ENCODE measurements at regions of chr1 and their contacts with region 1.

Region 1: GRCh38 chr1:20633190-20634064 is at the start of gene PINK1:
- DNase-seq: peak; percentile 74 to 94 (median 87)
- ATAC-seq: peak; percentile 90
- H3K4me3 ChIP-seq: peak within 1 kb of the TSS; percentile 59 to 62
- H3K4me3 Mint-ChIP-seq: peak within 1 kb of the TSS; percentile 87
- H3K27ac ChIP-seq: peak within 1 kb of the TSS; percentile 46 to 55
- H3K27ac Mint-ChIP-seq: peak within 1 kb of the TSS; percentile 85
- H3K4me1 ChIP-seq: peaks cover 8% of the 10 kb centered on the region
- H3K4me1 Mint-ChIP-seq: peaks cover 9% of the 10 kb centered on the region
- H3K27me3 ChIP-seq: no peaks in the 10 kb centered on the region
- H3K27me3 Mint-ChIP-seq: no peaks in the 10 kb centered on the region
- CTCF ChIP-seq: peak; percentile 98
- total RNA-seq, gene PINK1: 8.0 to 8.3 TPM

Region 2: GRCh38 chr1:19882111-19883071 is 751.0 kb before region 1 on chr1 and contains the start of gene OTUD3:
- CTCF ChIA-PET with region 1: no interaction called
- POLR2A ChIA-PET with region 1: no interaction called
- intact Hi-C with region 1: loop called in 1 of 2 experiments (anchors 2 kb)
- DNase-seq: peak; percentile 89 to 99 (median 95)
- ATAC-seq: peak; percentile 97
- H3K4me3 ChIP-seq: peak within 1 kb of the TSS; percentile 71 to 88
- H3K4me3 Mint-ChIP-seq: peak within 1 kb of the TSS; percentile 90
- H3K27ac ChIP-seq: peak within 1 kb of the TSS; percentile 67 to 77
- H3K27ac Mint-ChIP-seq: peak within 1 kb of the TSS; percentile 61
- H3K4me1 ChIP-seq: peaks cover 18% of the 10 kb centered on the region
- H3K4me1 Mint-ChIP-seq: peaks cover 43% of the 10 kb centered on the region
- H3K27me3 ChIP-seq: no peaks in the 10 kb centered on the region
- H3K27me3 Mint-ChIP-seq: no peaks in the 10 kb centered on the region
- CTCF ChIP-seq: peak; percentile 90
- total RNA-seq, gene OTUD3: 16.5 to 17.3 TPM

Region 3: DNA sequence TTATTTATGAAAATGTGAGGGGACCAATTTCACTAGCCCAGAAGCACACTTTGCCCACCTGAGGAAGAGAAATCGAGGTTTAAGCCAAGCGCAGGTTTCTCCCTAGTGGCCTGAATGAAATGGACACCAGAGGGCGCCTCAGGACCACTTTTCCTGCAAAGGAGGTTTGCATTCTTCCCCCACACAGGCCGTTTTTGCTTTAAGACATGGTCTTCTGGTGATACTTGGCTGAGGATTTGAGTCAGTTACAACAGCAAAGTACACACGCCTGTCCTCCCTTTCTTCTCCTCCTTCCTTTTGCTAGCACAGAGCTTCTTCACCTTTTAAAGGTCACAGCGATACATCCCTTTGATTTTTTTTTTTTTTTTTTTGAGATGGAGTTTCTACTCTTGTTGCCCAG is 715.4 kb before region 1 on chr1:
- CTCF ChIA-PET with region 1: no interaction called
- POLR2A ChIA-PET with region 1: no interaction called
- intact Hi-C with region 1: loop called in 1 of 2 experiments (anchors 5 kb)
- DNase-seq: peak; percentile 67 to 88 (median 81)
- ATAC-seq: peak; percentile 57
- H3K4me3 ChIP-seq: no peak overlapping the region
- H3K4me3 Mint-ChIP-seq: no peak overlapping the region
- H3K27ac ChIP-seq: no peak overlapping the region
- H3K27ac Mint-ChIP-seq: no peak overlapping the region
- H3K4me1 ChIP-seq: no peaks in the 10 kb centered on the region
- H3K4me1 Mint-ChIP-seq: peaks cover 2% of the 10 kb centered on the region
- H3K27me3 ChIP-seq: no peaks in the 10 kb centered on the region
- H3K27me3 Mint-ChIP-seq: peaks cover 5% of the 10 kb centered on the region
- CTCF ChIP-seq: peak; percentile 88

Region 4: DNA sequence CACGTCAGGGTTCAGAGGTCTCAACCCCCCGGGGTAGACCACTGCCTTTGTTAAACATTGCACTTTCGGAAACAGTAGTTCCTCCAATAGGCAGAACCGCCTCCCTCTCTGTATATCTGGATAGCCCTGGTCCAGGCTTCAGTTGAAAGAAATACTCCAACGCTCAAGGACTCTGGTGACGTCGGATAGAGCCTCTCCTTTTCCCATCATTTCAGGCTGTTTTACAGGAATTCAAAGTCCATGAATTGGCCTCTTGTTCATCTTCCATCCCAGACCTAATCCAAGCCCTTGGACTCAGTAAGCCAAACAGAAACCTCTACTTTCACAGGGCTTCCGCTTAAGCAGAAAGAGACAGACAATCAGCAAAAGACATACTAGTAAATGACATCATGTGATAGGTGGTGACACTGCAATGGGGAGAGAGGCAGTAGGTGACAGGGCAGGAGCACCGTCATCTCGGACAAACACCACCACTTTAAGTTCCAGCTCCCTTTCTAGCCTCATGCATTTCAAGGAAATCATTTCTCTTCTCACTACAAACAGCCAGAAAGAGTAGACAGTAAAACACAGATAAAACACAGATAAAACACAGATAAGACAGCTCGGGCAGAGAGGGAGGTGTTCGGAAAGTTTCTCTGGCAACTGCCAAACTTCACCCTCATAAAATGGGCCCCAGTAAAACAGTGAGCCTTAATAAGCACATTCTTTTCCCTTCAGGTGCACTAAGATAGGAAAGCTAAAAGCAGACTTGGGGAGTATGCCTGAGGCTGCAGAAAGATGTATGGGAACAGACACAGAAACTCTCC is 651.7 kb before region 1 on chr1:
- CTCF ChIA-PET with region 1: no interaction called
- POLR2A ChIA-PET with region 1: no interaction called
- intact Hi-C with region 1: no loop called
- DNase-seq: no peak
- ATAC-seq: no peak
- H3K4me3 ChIP-seq: no peak overlapping the region
- H3K4me3 Mint-ChIP-seq: no peak overlapping the region
- H3K27ac ChIP-seq: no peak overlapping the region
- H3K27ac Mint-ChIP-seq: no peak overlapping the region
- H3K4me1 ChIP-seq: no peaks in the 10 kb centered on the region
- H3K4me1 Mint-ChIP-seq: no peaks in the 10 kb centered on the region
- H3K27me3 ChIP-seq: no peaks in the 10 kb centered on the region
- H3K27me3 Mint-ChIP-seq: peaks cover 26% of the 10 kb centered on the region
- CTCF ChIP-seq: no peak

Region 5: DNA sequence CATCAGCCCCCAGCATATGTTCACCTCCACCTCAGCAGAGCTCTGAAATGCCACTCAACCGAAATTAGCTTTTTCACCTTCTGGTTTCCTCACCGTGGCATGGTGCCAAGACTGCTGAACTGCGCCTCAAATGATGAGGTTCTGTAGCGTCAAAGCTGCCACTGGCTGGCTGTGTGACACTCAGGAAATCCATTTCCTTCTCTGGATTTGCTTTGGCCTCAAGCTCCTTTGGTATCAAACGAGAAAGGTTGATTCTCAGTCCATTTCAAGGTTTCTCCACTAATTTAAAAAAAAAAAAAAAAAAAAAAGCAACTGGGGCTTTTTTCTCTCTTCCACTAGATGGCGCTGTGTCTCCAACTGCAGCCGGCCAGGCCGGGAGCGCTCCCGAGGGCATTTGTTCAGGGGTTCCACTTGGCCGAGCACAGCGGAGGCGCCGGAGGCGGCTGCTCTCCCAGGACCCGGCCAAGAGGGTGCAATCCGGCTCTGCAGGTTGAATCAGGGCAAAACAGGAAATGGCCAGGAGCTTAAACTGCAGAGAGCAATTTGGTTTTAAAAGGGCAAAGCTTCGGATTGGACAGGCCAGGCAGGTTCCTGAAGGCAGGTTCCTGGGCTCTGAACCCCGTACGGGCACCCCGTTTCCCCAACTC is 420.6 kb before region 1 on chr1:
- CTCF ChIA-PET with region 1: no interaction called
- POLR2A ChIA-PET with region 1: no interaction called
- intact Hi-C with region 1: loop called (anchors 10 kb)
- DNase-seq: peak; percentile 14 to 70 (median 46)
- ATAC-seq: peak; percentile 55
- H3K4me3 ChIP-seq: no peak overlapping the region
- H3K4me3 Mint-ChIP-seq: peak overlapping the region; percentile 59
- H3K27ac ChIP-seq: no peak overlapping the region
- H3K27ac Mint-ChIP-seq: no peak overlapping the region
- H3K4me1 ChIP-seq: peaks cover 6% of the 10 kb centered on the region
- H3K4me1 Mint-ChIP-seq: peaks cover 5% of the 10 kb centered on the region
- H3K27me3 ChIP-seq: peaks cover 0 to 4% of the 10 kb centered on the region in 2 experiments
- H3K27me3 Mint-ChIP-seq: peaks cover 44% of the 10 kb centered on the region
- CTCF ChIP-seq: peak; percentile 83

Region 6: DNA sequence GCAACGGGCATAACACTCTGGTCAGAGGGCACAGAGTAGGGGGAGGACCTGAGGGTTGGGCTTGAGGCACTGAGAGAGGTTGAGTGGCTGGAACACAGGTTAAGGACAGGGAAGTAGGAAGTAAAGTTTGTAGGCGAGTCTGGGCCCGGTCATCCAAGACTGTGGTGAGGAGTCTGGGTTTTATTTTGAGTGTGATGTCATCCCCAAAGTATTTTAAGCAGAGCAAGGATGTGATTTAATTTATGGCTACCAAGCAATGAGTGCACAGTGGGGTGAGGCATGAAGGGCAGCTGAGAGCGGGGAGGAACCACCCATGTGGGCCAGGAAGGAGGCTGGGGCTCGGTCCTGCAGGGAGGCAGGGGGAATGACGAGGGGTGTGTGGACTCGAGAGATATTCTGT is 353.9 kb before region 1 on chr1:
- CTCF ChIA-PET with region 1: no interaction called
- POLR2A ChIA-PET with region 1: no interaction called
- intact Hi-C with region 1: no loop called
- DNase-seq: no peak
- ATAC-seq: no peak
- H3K4me3 ChIP-seq: no peak overlapping the region
- H3K4me3 Mint-ChIP-seq: no peak overlapping the region
- H3K27ac ChIP-seq: no peak overlapping the region
- H3K27ac Mint-ChIP-seq: no peak overlapping the region
- H3K4me1 ChIP-seq: no peaks in the 10 kb centered on the region
- H3K4me1 Mint-ChIP-seq: no peaks in the 10 kb centered on the region
- H3K27me3 ChIP-seq: peaks cover 0 to 3% of the 10 kb centered on the region in 2 experiments
- H3K27me3 Mint-ChIP-seq: peaks cover 26% of the 10 kb centered on the region
- CTCF ChIP-seq: no peak

Region 7: GRCh38 chr1:20521960-20522861 is 111.2 kb before region 1 on chr1:
- CTCF ChIA-PET with region 1: interaction called, 67 read pairs
- POLR2A ChIA-PET with region 1: no interaction called
- intact Hi-C with region 1: loop called in 1 of 2 experiments (anchors 1 kb)
- DNase-seq: peak; percentile 38 to 74 (median 68)
- ATAC-seq: peak; percentile 65
- H3K4me3 ChIP-seq: no peak overlapping the region
- H3K4me3 Mint-ChIP-seq: no peak overlapping the region
- H3K27ac ChIP-seq: no peak overlapping the region
- H3K27ac Mint-ChIP-seq: no peak overlapping the region
- H3K4me1 ChIP-seq: no peaks in the 10 kb centered on the region
- H3K4me1 Mint-ChIP-seq: no peaks in the 10 kb centered on the region
- H3K27me3 ChIP-seq: no peaks in the 10 kb centered on the region
- H3K27me3 Mint-ChIP-seq: peaks cover 22% of the 10 kb centered on the region
- CTCF ChIP-seq: peak; percentile 82

Region 8: DNA sequence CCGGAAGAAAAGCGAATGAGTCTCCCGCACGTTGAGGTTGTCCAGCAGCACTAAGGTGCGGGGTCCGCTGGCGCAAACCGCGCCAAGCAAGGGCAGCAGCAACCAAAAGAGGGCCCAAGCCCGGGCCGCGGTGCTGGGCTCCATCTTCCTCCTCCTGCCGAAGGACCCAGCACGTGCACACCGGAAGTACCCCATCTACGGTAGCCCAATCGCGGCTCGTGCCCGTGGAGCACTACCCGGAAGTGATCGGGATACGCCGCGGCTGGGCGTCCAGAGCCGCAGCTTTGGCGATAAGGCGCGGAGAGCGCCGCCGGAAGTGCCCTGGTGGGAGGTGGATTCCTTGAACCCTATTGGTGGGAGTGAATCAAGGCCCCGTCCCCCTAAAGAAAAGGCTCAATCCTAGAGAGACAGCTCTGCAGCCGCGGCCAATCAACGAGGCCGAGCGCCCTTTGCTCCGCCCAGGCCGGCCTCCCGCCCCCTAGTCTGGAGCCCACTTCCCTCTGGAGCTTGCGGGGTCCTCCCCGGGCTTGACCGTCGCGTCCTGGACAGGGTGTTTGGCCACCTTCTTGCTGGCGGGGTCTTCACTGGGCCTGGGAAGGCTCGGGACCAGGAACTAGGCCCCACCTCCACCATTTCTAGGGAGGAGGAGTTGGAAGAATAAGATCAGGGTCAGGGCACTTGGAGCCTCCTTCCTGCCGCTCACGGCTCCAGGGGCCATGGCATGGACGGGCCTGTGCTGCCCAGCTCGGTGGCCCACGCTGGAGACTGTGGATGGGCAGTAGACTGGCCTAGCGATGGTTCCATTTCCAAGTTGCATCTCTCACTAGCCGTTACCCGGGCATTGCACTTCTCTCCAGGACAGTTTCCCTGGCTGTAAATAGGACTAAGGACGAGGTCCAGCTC is 28.0 kb after region 1 on chr1 and contains the start of gene DDOST:
- CTCF ChIA-PET with region 1: interaction called, 20 read pairs
- POLR2A ChIA-PET with region 1: interaction called, 8 read pairs
- intact Hi-C with region 1: loop called (anchors 1 kb)
- DNase-seq: peak; percentile 86 to 98 (median 94)
- ATAC-seq: peak; percentile 94
- H3K4me3 ChIP-seq: peak within 1 kb of the TSS; percentile 85 to 95
- H3K4me3 Mint-ChIP-seq: peak within 1 kb of the TSS; percentile 98
- H3K27ac ChIP-seq: peak within 1 kb of the TSS; percentile 81 to 87
- H3K27ac Mint-ChIP-seq: peak within 1 kb of the TSS; percentile 98
- H3K4me1 ChIP-seq: peaks cover 28% of the 10 kb centered on the region
- H3K4me1 Mint-ChIP-seq: peaks cover 52% of the 10 kb centered on the region
- H3K27me3 ChIP-seq: no peaks in the 10 kb centered on the region
- H3K27me3 Mint-ChIP-seq: no peaks in the 10 kb centered on the region
- CTCF ChIP-seq: peak; percentile 27
- total RNA-seq, gene DDOST: 97.5 to 114 TPM

Region 9: DNA sequence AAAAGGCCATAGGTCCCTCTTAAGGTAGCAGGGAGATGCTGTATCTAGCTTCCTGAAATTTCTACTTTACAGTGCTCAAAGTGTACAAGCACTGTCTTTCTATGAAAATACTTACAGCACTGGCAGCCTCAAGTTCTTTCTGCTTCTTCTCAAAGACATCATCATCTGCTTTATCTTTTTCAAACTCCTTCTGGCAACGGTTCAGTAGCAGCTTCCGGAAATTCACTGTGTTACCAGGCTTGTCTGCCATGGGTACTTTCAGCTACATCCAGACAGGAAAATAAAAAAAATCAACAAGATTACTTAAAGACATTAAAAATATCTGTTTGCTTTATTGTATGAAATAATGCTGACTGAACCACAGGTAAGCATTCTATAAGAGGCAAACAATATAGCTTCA is 231.6 kb after region 1 on chr1:
- CTCF ChIA-PET with region 1: no interaction called
- POLR2A ChIA-PET with region 1: no interaction called
- intact Hi-C with region 1: no loop called
- DNase-seq: no peak
- ATAC-seq: no peak
- H3K4me3 ChIP-seq: no peak overlapping the region
- H3K4me3 Mint-ChIP-seq: no peak overlapping the region
- H3K27ac ChIP-seq: no peak overlapping the region
- H3K27ac Mint-ChIP-seq: no peak overlapping the region
- H3K4me1 ChIP-seq: no peaks in the 10 kb centered on the region
- H3K4me1 Mint-ChIP-seq: no peaks in the 10 kb centered on the region
- H3K27me3 ChIP-seq: no peaks in the 10 kb centered on the region
- H3K27me3 Mint-ChIP-seq: no peaks in the 10 kb centered on the region
- CTCF ChIP-seq: no peak

Measured in CD8-positive, alpha-beta T cell (primary cell).